PC-9 (cell line): ENCODE measurements at regions of chr4 and their contacts with region 1.

Region 1: GRCh38 chr4:164304101-164304639 is 449.8 kb upstream of the SMIM31 start:
- DNase-seq: no peak
- H3K4me3 ChIP-seq: no peak overlapping the region
- H3K27ac ChIP-seq: no peak overlapping the region
- H3K4me1 ChIP-seq: peaks cover 10% of the 10 kb centered on the region
- H3K27me3 ChIP-seq: no peaks in the 10 kb centered on the region
- CTCF ChIP-seq: no peak

Region 2: GRCh38 chr4:164204434-164204833 is 99.7 kb before region 1 on chr4:
- CTCF ChIA-PET with region 1: no interaction called
- POLR2A ChIA-PET with region 1: no interaction called
- intact Hi-C with region 1: loop called (anchors 10 kb)
- DNase-seq: peak; percentile 33 to 93
- H3K4me3 ChIP-seq: no peak overlapping the region; the same call in 1 of the 2 replicates
- H3K27ac ChIP-seq: peak overlapping the region; percentile 98
- H3K4me1 ChIP-seq: peaks cover 22% of the 10 kb centered on the region
- H3K27me3 ChIP-seq: no peaks in the 10 kb centered on the region
- CTCF ChIP-seq: no peak